ENCODE measurements at regions of chr20 and their contacts with region 1.

Region 1: DNA sequence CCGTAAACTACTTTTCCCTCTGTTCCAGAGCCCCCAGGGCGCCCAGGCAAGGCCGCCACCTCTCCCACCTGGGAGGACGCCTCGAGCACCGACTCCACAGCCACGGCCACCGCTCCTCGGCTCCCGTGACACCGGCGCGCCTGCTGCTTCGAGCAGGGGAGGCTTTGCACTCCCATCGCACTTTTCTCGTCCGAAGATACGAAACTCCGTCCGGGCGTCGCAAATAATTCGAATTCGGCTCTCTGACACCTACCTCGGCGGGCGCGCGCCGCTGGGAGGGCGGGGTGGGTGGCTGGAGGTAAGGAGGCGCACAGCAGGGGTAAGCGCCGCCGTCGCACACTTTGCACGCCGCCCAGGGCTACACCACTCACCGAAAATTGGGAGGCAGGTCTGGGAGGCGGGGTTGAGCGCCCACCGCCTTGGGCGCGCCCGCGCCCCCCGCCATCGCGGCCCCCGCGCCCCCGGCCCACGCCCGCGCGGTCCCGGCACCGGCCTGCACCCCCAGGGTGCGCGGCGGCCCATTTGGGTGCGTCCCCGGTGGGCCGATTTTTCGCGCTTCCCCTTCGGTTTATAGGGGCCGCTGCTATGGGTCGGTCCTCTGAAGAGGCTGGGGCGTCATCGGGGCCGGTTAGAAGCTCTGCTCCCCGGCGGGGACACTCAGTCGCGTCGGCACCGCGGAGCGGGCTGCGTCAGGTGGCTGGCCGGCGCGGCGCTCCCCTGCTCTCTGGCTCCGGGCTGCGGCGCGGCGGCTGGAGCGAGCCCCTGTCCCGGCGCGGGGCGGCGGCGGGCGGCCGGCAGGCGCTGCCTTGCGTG is 36.2 kb downstream of the GNAS start:
- DNase-seq: peak; percentile 73
- ATAC-seq: peak; percentile 45
- H3K4me3 Mint-ChIP-seq: peak overlapping the region; percentile 84
- H3K27ac Mint-ChIP-seq: peak overlapping the region; percentile 59
- H3K4me1 Mint-ChIP-seq: peaks cover 27% of the 10 kb centered on the region
- H3K27me3 Mint-ChIP-seq: no peaks in the 10 kb centered on the region
- CTCF ChIP-seq: no peak

Region 2: GRCh38 chr20:58829531-58829941 is 59.2 kb before region 1 on chr20:
- CTCF ChIA-PET with region 1: no interaction called
- POLR2A ChIA-PET with region 1: no interaction called
- intact Hi-C with region 1: no loop called
- DNase-seq: no peak
- ATAC-seq: no peak
- H3K4me3 Mint-ChIP-seq: no peak overlapping the region
- H3K27ac Mint-ChIP-seq: no peak overlapping the region
- H3K4me1 Mint-ChIP-seq: no peaks in the 10 kb centered on the region
- H3K27me3 Mint-ChIP-seq: peaks cover 5% of the 10 kb centered on the region
- CTCF ChIP-seq: no peak

Region 3: GRCh38 chr20:59042796-59043660 is 154.3 kb after region 1 on chr20:
- CTCF ChIA-PET with region 1: no interaction called
- POLR2A ChIA-PET with region 1: interaction called, 15 read pairs
- intact Hi-C with region 1: loop called (anchors 1 kb)
- DNase-seq: peak; percentile 97
- ATAC-seq: peak; percentile 97
- H3K4me3 Mint-ChIP-seq: peak overlapping the region; percentile 95
- H3K27ac Mint-ChIP-seq: peak overlapping the region; percentile 91
- H3K4me1 Mint-ChIP-seq: peaks cover 52% of the 10 kb centered on the region
- H3K27me3 Mint-ChIP-seq: no peaks in the 10 kb centered on the region
- CTCF ChIP-seq: no peak

Region 4: GRCh38 chr20:59334651-59335300 is 446.0 kb after region 1 on chr20:
- CTCF ChIA-PET with region 1: no interaction called
- POLR2A ChIA-PET with region 1: no interaction called
- intact Hi-C with region 1: no loop called
- DNase-seq: no peak
- ATAC-seq: no peak
- H3K4me3 Mint-ChIP-seq: no peak overlapping the region
- H3K27ac Mint-ChIP-seq: no peak overlapping the region
- H3K4me1 Mint-ChIP-seq: no peaks in the 10 kb centered on the region
- H3K27me3 Mint-ChIP-seq: peaks cover 18% of the 10 kb centered on the region
- CTCF ChIP-seq: no peak